Breast epithelium (tissue), 4 donors: ENCODE measurements at regions of chr3 and their contacts with region 1.

Region 1: GRCh38 chr3:11924518-11924917 is 77.8 kb upstream of the TAMM41 start:
- DNase-seq: no peak
- H3K4me3 ChIP-seq: no peak overlapping the region
- H3K27ac ChIP-seq: no peak overlapping the region
- H3K4me1 ChIP-seq: no peaks in the 10 kb centered on the region
- H3K27me3 ChIP-seq: no peaks in the 10 kb centered on the region
- CTCF ChIP-seq: no peak
- POLR2A ChIP-seq: no peak

Region 2: GRCh38 chr3:11724615-11725342 is 199.7 kb before region 1 on chr3:
- intact Hi-C with region 1: loop called (anchors 5 kb)
- DNase-seq: no peak
- H3K4me3 ChIP-seq: no peak overlapping the region
- H3K27ac ChIP-seq: no peak overlapping the region
- H3K4me1 ChIP-seq: no peaks in the 10 kb centered on the region
- H3K27me3 ChIP-seq: no peaks in the 10 kb centered on the region
- CTCF ChIP-seq: no peak
- POLR2A ChIP-seq: no peak

Region 3: GRCh38 chr3:12158387-12159226 is 234.1 kb after region 1 on chr3 and contains the start of gene TIMP4:
- intact Hi-C with region 1: no loop called
- DNase-seq: no peak
- H3K4me3 ChIP-seq: peak within 1 kb of the TSS; percentile 46 to 67 (median 49)
- H3K27ac ChIP-seq: peak within 1 kb of the TSS; percentile 36 to 72
- H3K4me1 ChIP-seq: no peaks in the 10 kb centered on the region
- H3K27me3 ChIP-seq: no peaks in the 10 kb centered on the region
- CTCF ChIP-seq: no peak
- POLR2A ChIP-seq: no peak
- total RNA-seq, gene TIMP4: 27.4 to 170 (median 46.9) TPM